Esophagus muscularis mucosa (tissue), 4 donors: ENCODE measurements at regions of chr15 and their contacts with region 1.

Region 1: DNA sequence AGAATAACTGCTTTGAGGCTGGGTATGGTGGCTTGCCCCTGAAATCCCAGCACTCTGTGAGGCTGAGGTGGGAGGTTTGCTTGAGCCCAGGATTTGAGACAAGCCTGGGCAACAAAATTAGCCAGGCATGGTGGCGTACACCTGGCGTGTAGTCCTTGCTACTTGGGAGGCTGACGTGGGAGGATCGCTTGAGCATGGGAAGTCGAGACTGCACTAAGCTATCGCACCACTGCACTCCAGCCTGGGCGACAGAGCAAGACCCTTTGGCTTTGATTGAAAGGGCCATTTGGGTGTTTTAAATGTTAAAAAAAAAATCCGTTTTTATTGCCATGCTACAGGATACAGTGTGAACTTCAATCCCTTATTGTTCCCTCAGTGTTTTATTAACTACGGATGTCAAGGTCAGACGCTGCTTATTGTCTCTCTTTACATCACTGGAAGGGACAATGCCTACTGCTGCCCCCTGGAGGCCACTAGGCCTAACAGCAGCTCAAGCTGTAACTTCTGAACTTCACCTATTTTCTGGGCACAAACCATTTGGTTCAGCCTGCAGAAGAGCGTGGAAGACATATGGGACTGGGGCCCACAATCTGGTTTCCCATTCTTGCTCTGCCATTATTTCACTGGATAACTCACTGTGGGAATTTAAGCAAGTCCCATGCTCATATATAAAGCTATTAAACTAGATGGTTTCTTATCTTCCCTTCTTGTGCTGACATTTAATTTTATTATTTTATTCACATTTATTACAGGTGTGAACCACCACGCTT is 15.3 kb upstream of the IREB2 start:
- DNase-seq: no peak
- H3K4me3 ChIP-seq: no peak overlapping the region
- H3K27ac ChIP-seq: no peak overlapping the region
- H3K4me1 ChIP-seq: peaks cover 0 to 6% (median 2%) of the 10 kb centered on the region in 4 donors
- H3K27me3 ChIP-seq: peaks cover 0 to 11% (median 0%) of the 10 kb centered on the region in 4 donors
- CTCF ChIP-seq: peak; percentile 86 to 88 (median 87)
- EP300 ChIP-seq: no peak
- POLR2A ChIP-seq: no peak

Region 2: DNA sequence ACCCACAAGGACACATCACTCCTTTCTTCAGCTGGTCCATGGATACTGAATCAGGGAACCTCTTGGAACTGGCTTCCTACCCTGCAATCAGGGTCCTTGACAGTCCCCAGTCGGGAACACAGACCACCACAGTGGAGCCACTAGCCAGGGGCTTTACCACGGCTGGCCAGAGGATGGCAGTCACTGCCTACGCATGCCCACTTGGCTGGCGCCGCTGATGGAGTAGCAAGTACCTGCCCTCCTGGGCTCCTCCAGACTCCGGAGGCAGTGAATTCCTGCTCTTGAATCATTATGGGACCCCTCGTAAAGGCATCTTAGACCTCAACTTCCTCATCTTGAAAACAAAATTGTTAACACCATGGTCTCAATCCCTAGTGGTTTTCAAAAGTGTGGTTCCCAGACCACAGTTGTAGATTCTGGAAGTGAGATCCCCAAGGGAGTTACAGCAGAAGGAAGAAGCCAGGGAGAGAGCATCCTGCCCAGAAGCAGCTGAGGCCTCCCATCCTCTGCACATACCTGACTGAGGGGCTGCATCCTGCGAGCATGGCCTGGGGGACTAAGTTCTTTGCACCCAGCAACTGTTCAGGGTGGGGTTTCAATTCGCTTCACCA is 114.2 kb before region 1 on chr15:
- intact Hi-C with region 1: loop called (anchors 2 kb)
- DNase-seq: no peak
- H3K4me3 ChIP-seq: no peak overlapping the region
- H3K27ac ChIP-seq: no peak overlapping the region
- H3K4me1 ChIP-seq: no peaks in the 10 kb centered on the region
- H3K27me3 ChIP-seq: peaks cover 0 to 63% (median 7%) of the 10 kb centered on the region in 4 donors
- CTCF ChIP-seq: peak; percentile 53 to 62 (median 56)
- EP300 ChIP-seq: no peak
- POLR2A ChIP-seq: no peak

Region 3: GRCh38 chr15:78565097-78565951 is 142.6 kb after region 1 on chr15 and contains the start of gene CHRNA5:
- intact Hi-C with region 1: no loop called
- DNase-seq: peak; percentile 97
- H3K4me3 ChIP-seq: peak within 1 kb of the TSS; percentile 61 to 75 (median 69)
- H3K27ac ChIP-seq: peak within 1 kb of the TSS; percentile 63 to 74 (median 68)
- H3K4me1 ChIP-seq: peaks cover 5 to 18% (median 17%) of the 10 kb centered on the region in 4 donors
- H3K27me3 ChIP-seq: peaks cover 0 to 6% (median 0%) of the 10 kb centered on the region in 4 donors
- CTCF ChIP-seq: no peak
- EP300 ChIP-seq: no peak
- POLR2A ChIP-seq: no peak
- total RNA-seq, gene CHRNA5: 0.80 to 1.2 (median 0.98) TPM